ENCODE measurements at regions of chr12 and their contacts with region 1.

Region 1: GRCh38 chr12:10364815-10365622 is 24.8 kb downstream of the KLRK1 start:
- DNase-seq: peak; percentile 29 to 87 (median 72)
- ATAC-seq: peak; percentile 57 to 67
- H3K4me3 Mint-ChIP-seq: no peak overlapping the region
- H3K27ac Mint-ChIP-seq: no peak overlapping the region
- H3K4me1 Mint-ChIP-seq: peaks cover 7 to 41% (median 34%) of the 10 kb centered on the region in 4 donors
- H3K27me3 Mint-ChIP-seq: no peaks in the 10 kb centered on the region

Region 2: GRCh38 chr12:10409387-10409786 is 44.4 kb after region 1 on chr12 and contains the start of gene KLRC4:
- POLR2A ChIA-PET with region 1: interaction called, 10 read pairs
- DNase-seq: peak in 6 of 10 donors; percentile 7 to 68 (median 52)
- ATAC-seq: peak; percentile 81 to 89
- H3K4me3 Mint-ChIP-seq: peak within 1 kb of the TSS; percentile 86 to 97 (median 90)
- H3K27ac Mint-ChIP-seq: peak within 1 kb of the TSS; percentile 38 to 98 (median 92)
- H3K4me1 Mint-ChIP-seq: peaks cover 9 to 36% (median 25%) of the 10 kb centered on the region in 4 donors
- H3K27me3 Mint-ChIP-seq: no peaks in the 10 kb centered on the region
- polyA plus RNA-seq, gene KLRC4: 1.3 to 31.8 (median 13.6) TPM

Region 3: DNA sequence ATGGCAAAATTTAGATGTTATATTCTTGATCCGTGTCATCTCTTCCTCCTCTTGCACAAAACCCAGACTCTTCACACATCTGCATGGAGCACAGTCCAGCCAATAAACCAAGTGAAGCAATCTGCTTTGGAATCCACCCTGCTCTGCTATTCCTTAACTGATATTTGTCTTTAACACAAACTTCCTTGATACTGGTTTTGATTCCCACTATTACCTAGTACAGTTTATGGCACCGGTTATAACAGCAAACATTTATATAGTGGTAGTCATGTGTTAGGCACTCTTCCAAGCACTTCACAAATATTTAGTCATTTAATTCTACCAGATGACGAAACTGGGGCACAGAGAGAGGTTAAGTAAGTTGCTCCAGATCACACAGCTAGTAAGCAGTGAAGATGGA is 296.3 kb after region 1 on chr12:
- POLR2A ChIA-PET with region 1: no interaction called
- DNase-seq: no peak
- ATAC-seq: no peak
- H3K4me3 Mint-ChIP-seq: no peak overlapping the region
- H3K27ac Mint-ChIP-seq: no peak overlapping the region
- H3K4me1 Mint-ChIP-seq: no peaks in the 10 kb centered on the region
- H3K27me3 Mint-ChIP-seq: peaks cover 0 to 2% (median 0%) of the 10 kb centered on the region in 5 donors